ENCODE measurements at regions of chr1 and their contacts with region 1.

Region 1: GRCh38 chr1:184082541-184083415 is 31.2 kb downstream of the TSEN15 start:
- DNase-seq: no peak
- H3K4me3 ChIP-seq: no peak overlapping the region
- H3K27ac ChIP-seq: no peak overlapping the region
- H3K4me1 ChIP-seq: no peaks in the 10 kb centered on the region
- H3K27me3 ChIP-seq: no peaks in the 10 kb centered on the region
- CTCF ChIP-seq: no peak
- EP300 ChIP-seq: no peak
- POLR2A ChIP-seq: no peak

Region 2: DNA sequence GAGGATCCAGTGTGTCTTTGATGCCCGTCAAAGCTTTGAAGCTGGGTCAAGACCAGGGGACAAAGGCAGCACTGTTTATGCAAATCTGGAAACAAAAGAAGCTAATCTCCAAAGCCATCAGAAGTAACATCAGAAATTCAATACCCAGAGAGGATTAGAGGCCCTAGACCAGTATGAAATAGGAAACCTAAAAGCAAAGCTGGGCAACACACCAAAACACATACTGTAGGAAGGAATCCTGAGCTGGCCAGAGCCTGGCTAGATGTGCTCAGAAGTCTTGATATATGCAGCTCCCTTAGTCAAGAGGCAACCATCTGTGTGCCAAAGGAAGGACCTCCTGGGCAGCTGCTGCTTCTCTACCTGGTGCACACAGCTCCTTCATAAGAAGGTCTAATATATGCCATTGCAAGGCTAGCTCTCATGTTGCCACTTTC is 57.5 kb before region 1 on chr1:
- intact Hi-C with region 1: no loop called
- DNase-seq: no peak
- H3K4me3 ChIP-seq: no peak overlapping the region
- H3K27ac ChIP-seq: no peak overlapping the region
- H3K4me1 ChIP-seq: peaks cover 2% of the 10 kb centered on the region
- H3K27me3 ChIP-seq: no peaks in the 10 kb centered on the region
- CTCF ChIP-seq: no peak
- EP300 ChIP-seq: no peak
- POLR2A ChIP-seq: no peak

Region 3: GRCh38 chr1:184222652-184223052 is 139.9 kb after region 1 on chr1:
- intact Hi-C with region 1: loop called in 1 of 4 experiments (anchors 10 kb)
- DNase-seq: peak in 3 of 5 donors; percentile 37 to 47 (median 40)
- H3K4me3 ChIP-seq: no peak overlapping the region
- H3K27ac ChIP-seq: no peak overlapping the region
- H3K4me1 ChIP-seq: no peaks in the 10 kb centered on the region
- H3K27me3 ChIP-seq: no peaks in the 10 kb centered on the region
- CTCF ChIP-seq: peak in 2 of 3 donors; percentile 55 to 71
- EP300 ChIP-seq: no peak
- POLR2A ChIP-seq: no peak

Measured in ovary (tissue), 10 donors.